T-cell (primary cell): ENCODE measurements at regions of chr12 and their contacts with region 1.

Region 1: GRCh38 chr12:67286257-67286656 is 17.1 kb downstream of the CAND1 start:
- DNase-seq: no peak
- ATAC-seq: no peak
- H3K4me3 ChIP-seq: no peak overlapping the region
- H3K4me3 Mint-ChIP-seq: no peak overlapping the region
- H3K27ac ChIP-seq: no peak overlapping the region
- H3K27ac Mint-ChIP-seq: no peak overlapping the region
- H3K4me1 ChIP-seq: peaks cover 3% of the 10 kb centered on the region in 2 experiments
- H3K4me1 Mint-ChIP-seq: peaks cover 70 to 74% (median 72%) of the 10 kb centered on the region in 3 donors
- H3K27me3 ChIP-seq: no peaks in the 10 kb centered on the region
- H3K27me3 Mint-ChIP-seq: no peaks in the 10 kb centered on the region

Region 2: GRCh38 chr12:67268896-67269631 is 17.2 kb before region 1 on chr12 and contains the start of gene CAND1:
- CTCF ChIA-PET with region 1: interaction called, 3 to 4 read pairs
- POLR2A ChIA-PET with region 1: interaction called, 4 to 11 read pairs
- DNase-seq: peak; percentile 90 to 99 (median 95)
- ATAC-seq: peak; percentile 80 to 86 (median 82)
- H3K4me3 ChIP-seq: peak within 1 kb of the TSS; percentile 97
- H3K4me3 Mint-ChIP-seq: peak within 1 kb of the TSS; percentile 92 to 99 (median 93)
- H3K27ac ChIP-seq: peak within 1 kb of the TSS; percentile 94
- H3K27ac Mint-ChIP-seq: peak within 1 kb of the TSS; percentile 98
- H3K4me1 ChIP-seq: peaks cover 22 to 32% of the 10 kb centered on the region in 2 experiments
- H3K4me1 Mint-ChIP-seq: peaks cover 48 to 55% (median 50%) of the 10 kb centered on the region in 3 donors
- H3K27me3 ChIP-seq: no peaks in the 10 kb centered on the region
- H3K27me3 Mint-ChIP-seq: no peaks in the 10 kb centered on the region
- total RNA-seq, gene CAND1: 91.4 to 113 (median 107) TPM

Region 3: DNA sequence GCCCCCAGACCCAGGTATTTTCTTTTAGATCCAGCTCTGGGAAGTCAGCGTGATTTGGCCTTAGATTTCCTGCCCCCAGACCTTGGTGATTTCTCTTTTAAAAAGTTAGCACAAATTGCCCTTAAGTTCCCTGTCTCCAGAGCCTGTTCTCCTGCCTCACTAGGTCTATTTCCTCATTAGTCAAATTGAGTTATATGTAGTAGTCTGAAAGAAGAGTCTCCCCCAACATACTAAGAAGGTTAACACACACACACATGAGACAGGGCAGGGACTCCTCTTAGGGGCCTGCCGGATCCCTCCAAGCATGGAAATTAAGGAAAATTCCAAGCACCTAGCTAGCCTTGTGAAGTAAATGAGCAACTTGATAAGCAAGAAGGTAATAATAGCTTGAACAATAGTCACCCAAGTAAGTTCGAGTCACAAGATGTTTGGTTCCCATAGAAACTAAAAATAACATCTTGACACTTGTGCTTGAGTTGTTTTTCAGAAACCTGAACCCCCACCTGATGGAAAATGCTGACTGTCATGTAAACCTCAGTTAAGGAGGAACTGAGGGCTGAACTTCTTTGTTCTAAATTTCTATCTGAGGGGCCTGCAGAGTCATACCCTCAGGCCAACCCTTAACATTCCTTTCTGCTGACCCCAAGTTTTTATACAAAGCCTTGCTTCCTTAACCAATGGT is 34.5 kb after region 1 on chr12:
- CTCF ChIA-PET with region 1: no interaction called
- POLR2A ChIA-PET with region 1: no interaction called
- DNase-seq: peak in 1 of 35 experiments; percentile 22
- ATAC-seq: peak in 1 of 4 experiments; percentile 16
- H3K4me3 ChIP-seq: no peak overlapping the region
- H3K4me3 Mint-ChIP-seq: no peak overlapping the region
- H3K27ac ChIP-seq: no peak overlapping the region
- H3K27ac Mint-ChIP-seq: peak overlapping the region in 1 of 2 donors; percentile 12
- H3K4me1 ChIP-seq: no peaks in the 10 kb centered on the region
- H3K4me1 Mint-ChIP-seq: peaks cover 11 to 14% (median 12%) of the 10 kb centered on the region in 3 donors
- H3K27me3 ChIP-seq: peaks cover 0 to 3% of the 10 kb centered on the region in 2 experiments
- H3K27me3 Mint-ChIP-seq: no peaks in the 10 kb centered on the region

Region 4: DNA sequence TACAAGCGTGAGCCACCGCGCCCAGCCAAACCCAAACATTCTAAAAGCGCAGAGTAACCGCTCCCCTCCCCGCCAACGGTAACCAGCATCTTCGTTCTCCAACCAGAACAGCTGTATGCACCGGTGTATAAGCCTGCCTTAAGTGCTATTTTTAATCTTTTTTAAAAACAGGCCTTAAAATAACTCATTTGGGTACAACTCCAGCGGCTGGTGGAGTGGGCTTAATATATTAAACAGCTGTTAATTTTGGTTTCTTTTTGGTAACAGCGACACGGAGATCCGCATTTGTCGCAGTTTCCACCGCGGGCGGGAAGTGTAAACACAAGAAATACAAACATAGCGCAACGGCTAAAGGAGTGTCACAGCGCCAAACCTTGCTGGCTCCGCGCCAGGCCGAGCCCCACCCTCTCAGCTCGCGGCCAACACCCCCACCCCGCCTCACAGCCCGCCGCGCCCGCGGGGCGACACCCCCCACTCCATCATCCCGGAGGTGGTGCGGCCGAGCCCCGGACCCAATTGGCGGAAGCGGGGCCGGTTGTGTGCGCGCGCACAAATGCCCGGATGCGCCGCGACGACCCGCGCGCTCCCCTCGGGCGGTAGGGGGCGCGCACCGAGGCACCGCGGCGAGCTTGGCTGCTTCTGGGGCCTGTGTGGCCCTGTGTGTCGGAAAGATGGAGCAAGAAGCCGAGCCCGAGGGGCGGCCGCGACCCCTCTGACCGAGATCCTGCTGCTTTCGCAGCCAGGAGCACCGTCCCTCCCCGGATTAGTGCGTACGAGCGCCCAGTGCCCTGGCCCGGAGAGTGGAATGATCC is 1521.5 kb after region 1 on chr12 and contains the start of gene MDM2:
- CTCF ChIA-PET with region 1: no interaction called
- POLR2A ChIA-PET with region 1: interaction called in 1 of 2 experiments, 11 read pairs
- DNase-seq: peak; percentile 93 to 99 (median 97)
- ATAC-seq: peak; percentile 90 to 95 (median 93)
- H3K4me3 ChIP-seq: peak within 1 kb of the TSS; percentile 79 to 82
- H3K4me3 Mint-ChIP-seq: peak within 1 kb of the TSS; percentile 91 to 97 (median 95)
- H3K27ac ChIP-seq: peak within 1 kb of the TSS; percentile 94
- H3K27ac Mint-ChIP-seq: peak within 1 kb of the TSS; percentile 98 to 99
- H3K4me1 ChIP-seq: peaks cover 3 to 22% of the 10 kb centered on the region in 2 experiments
- H3K4me1 Mint-ChIP-seq: peaks cover 26 to 39% (median 34%) of the 10 kb centered on the region in 3 donors
- H3K27me3 ChIP-seq: no peaks in the 10 kb centered on the region
- H3K27me3 Mint-ChIP-seq: no peaks in the 10 kb centered on the region
- total RNA-seq, gene MDM2: 75.3 to 96.6 (median 84.4) TPM